ENCODE measurements at regions of chr5 and their contacts with region 1.

Region 1: GRCh38 chr5:88761269-88761850 is 121.6 kb downstream of the MEF2C start:
- DNase-seq: no peak
- ATAC-seq: peak; percentile 59
- H3K4me3 Mint-ChIP-seq: peak overlapping the region; percentile 1
- H3K27ac Mint-ChIP-seq: peak overlapping the region; percentile 70
- H3K4me1 Mint-ChIP-seq: peaks cover 31% of the 10 kb centered on the region
- H3K27me3 Mint-ChIP-seq: no peaks in the 10 kb centered on the region
- CTCF ChIP-seq: no peak

Region 2: GRCh38 chr5:88746438-88746882 is 14.9 kb before region 1 on chr5:
- CTCF ChIA-PET with region 1: interaction called, 3 read pairs
- POLR2A ChIA-PET with region 1: interaction called, 7 read pairs
- intact Hi-C with region 1: loop called (anchors 1 kb)
- DNase-seq: no peak
- ATAC-seq: peak; percentile 79
- H3K4me3 Mint-ChIP-seq: no peak overlapping the region
- H3K27ac Mint-ChIP-seq: peak overlapping the region; percentile 80
- H3K4me1 Mint-ChIP-seq: peaks cover 56% of the 10 kb centered on the region
- H3K27me3 Mint-ChIP-seq: no peaks in the 10 kb centered on the region
- CTCF ChIP-seq: no peak

Region 3: DNA sequence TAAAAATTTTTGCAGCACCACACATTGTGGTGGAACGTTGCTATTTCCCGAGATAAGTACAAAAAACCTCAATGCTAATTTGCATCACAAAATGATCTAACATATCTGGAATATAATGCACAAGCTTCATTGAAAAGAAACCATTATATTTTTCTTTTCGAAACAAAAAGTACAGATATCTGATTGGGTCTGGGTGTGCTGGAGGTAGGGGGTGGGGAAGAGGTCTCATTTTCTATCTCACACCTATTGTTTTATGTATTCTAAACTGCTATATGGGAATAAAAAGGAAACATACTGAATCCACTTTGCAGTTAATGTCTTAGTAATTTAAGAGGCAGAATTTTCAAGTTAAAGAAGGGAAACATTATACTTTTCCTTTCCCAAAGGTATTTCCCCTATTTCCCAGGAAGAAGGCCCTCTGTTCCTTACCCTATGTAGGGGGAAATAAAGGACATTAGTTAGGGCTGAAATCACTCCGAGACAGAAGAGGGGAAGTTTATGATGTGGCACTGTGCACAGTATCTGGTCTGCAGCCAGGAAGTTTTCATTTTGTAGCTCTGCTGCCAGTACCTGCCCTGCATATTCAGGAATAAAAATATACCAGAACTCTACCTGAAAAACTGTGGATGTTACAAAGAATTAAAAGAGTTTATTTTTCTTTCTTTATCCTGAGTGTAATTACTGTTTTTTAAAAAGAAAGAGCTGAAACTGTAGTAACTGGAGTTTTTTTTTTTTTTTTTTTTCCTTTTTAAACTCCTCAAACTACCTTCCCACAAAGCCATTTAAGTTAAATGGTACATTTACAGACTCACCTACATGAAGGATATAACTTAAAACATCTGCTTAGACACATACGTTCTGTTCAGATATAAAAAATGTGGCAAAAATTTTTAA is 114.2 kb after region 1 on chr5:
- CTCF ChIA-PET with region 1: no interaction called
- POLR2A ChIA-PET with region 1: interaction called, 10 read pairs
- intact Hi-C with region 1: no loop called
- DNase-seq: no peak
- ATAC-seq: peak; percentile 45
- H3K4me3 Mint-ChIP-seq: peak overlapping the region; percentile 63
- H3K27ac Mint-ChIP-seq: peak overlapping the region; percentile 68
- H3K4me1 Mint-ChIP-seq: peaks cover 68% of the 10 kb centered on the region
- H3K27me3 Mint-ChIP-seq: no peaks in the 10 kb centered on the region
- CTCF ChIP-seq: no peak

Region 4: GRCh38 chr5:89343666-89344065 is 582.3 kb after region 1 on chr5:
- CTCF ChIA-PET with region 1: no interaction called
- POLR2A ChIA-PET with region 1: no interaction called
- intact Hi-C with region 1: no loop called
- DNase-seq: peak; percentile 29
- ATAC-seq: peak; percentile 79
- H3K4me3 Mint-ChIP-seq: peak overlapping the region; percentile 42
- H3K27ac Mint-ChIP-seq: peak overlapping the region; percentile 80
- H3K4me1 Mint-ChIP-seq: peaks cover 49% of the 10 kb centered on the region
- H3K27me3 Mint-ChIP-seq: no peaks in the 10 kb centered on the region
- CTCF ChIP-seq: no peak